Naive thymus-derived CD4-positive, alpha-beta T cell (primary cell): ENCODE measurements at regions of chr1 and their contacts with region 1.

Region 1: DNA sequence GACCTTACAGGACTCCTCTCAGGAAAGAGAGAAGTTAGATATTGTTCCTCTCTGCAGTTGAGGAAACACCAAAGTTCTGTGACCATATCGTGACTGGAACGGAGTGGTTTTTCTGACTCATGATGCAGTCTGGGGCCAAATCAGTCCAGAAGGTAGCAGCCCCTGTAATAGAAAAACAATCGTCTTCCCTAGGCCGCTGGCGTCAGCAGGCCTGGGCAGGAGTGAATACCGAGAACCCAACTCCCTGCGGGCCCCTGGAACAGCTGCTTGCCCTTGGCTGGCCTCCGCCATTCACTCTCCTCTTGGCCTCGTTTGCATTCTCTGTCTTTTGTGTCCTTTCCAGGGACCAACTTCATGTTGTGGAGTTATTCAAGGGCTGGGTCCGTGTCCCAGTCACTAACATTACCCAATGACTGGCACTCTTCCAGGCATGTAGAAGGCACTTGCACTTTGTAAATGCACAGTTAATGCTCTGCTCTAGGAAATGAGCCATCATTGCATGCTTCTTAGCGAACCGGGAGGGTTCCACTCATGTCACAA is 10.9 kb upstream of the CD101 start:
- DNase-seq: no peak
- ATAC-seq: peak; percentile 15
- H3K4me3 ChIP-seq: no peak overlapping the region
- H3K4me3 Mint-ChIP-seq: no peak overlapping the region
- H3K27ac ChIP-seq: no peak overlapping the region
- H3K27ac Mint-ChIP-seq: no peak overlapping the region
- H3K4me1 ChIP-seq: peaks cover 6 to 48% of the 10 kb centered on the region in 2 donors
- H3K4me1 Mint-ChIP-seq: peaks cover 22 to 70% (median 67%) of the 10 kb centered on the region in 7 donors
- H3K27me3 ChIP-seq: no peaks in the 10 kb centered on the region
- H3K27me3 Mint-ChIP-seq: no peaks in the 10 kb centered on the region

Region 2: GRCh38 chr1:116754198-116754977 is 236.3 kb before region 1 on chr1 and contains the start of gene CD2:
- CTCF ChIA-PET with region 1: interaction called, 4 read pairs
- POLR2A ChIA-PET with region 1: interaction called, 12 read pairs
- intact Hi-C with region 1: loop called in 1 of 2 experiments (anchors 5 kb)
- DNase-seq: peak in 7 of 9 donors; percentile 58 to 79 (median 71)
- ATAC-seq: peak; percentile 91
- H3K4me3 ChIP-seq: peak within 1 kb of the TSS; percentile 90
- H3K4me3 Mint-ChIP-seq: peak within 1 kb of the TSS; percentile 91 to 100 (median 98)
- H3K27ac ChIP-seq: peak within 1 kb of the TSS; percentile 89
- H3K27ac Mint-ChIP-seq: peak within 1 kb of the TSS; percentile 93 to 99 (median 97)
- H3K4me1 ChIP-seq: peaks cover 27 to 31% of the 10 kb centered on the region in 2 donors
- H3K4me1 Mint-ChIP-seq: peaks cover 25 to 47% (median 43%) of the 10 kb centered on the region in 7 donors
- H3K27me3 ChIP-seq: no peaks in the 10 kb centered on the region
- H3K27me3 Mint-ChIP-seq: no peaks in the 10 kb centered on the region
- total RNA-seq, gene CD2: 105 to 307 (median 174) TPM

Region 3: GRCh38 chr1:116817582-116818064 is 173.1 kb before region 1 on chr1:
- CTCF ChIA-PET with region 1: interaction called, 3 read pairs
- POLR2A ChIA-PET with region 1: interaction called, 4 read pairs
- intact Hi-C with region 1: loop called in 1 of 2 experiments (anchors 1 kb)
- DNase-seq: peak; percentile 43 to 67 (median 63)
- ATAC-seq: peak; percentile 85
- H3K4me3 ChIP-seq: no peak overlapping the region
- H3K4me3 Mint-ChIP-seq: peak overlapping the region; percentile 4 to 75 (median 58)
- H3K27ac ChIP-seq: no peak overlapping the region
- H3K27ac Mint-ChIP-seq: peak overlapping the region in 8 of 9 donors; percentile 22 to 85 (median 82)
- H3K4me1 ChIP-seq: peaks cover 23 to 33% of the 10 kb centered on the region in 2 donors
- H3K4me1 Mint-ChIP-seq: peaks cover 20 to 58% (median 34%) of the 10 kb centered on the region in 7 donors
- H3K27me3 ChIP-seq: no peaks in the 10 kb centered on the region
- H3K27me3 Mint-ChIP-seq: no peaks in the 10 kb centered on the region

Region 4: GRCh38 chr1:116909510-116910378 is 80.9 kb before region 1 on chr1 and contains the start of gene PTGFRN:
- CTCF ChIA-PET with region 1: interaction called, 3 read pairs
- POLR2A ChIA-PET with region 1: no interaction called
- intact Hi-C with region 1: loop called in 1 of 2 experiments (anchors 2 kb)
- DNase-seq: peak in 7 of 9 donors; percentile 5 to 45 (median 22)
- ATAC-seq: peak; percentile 62
- H3K4me3 ChIP-seq: peak within 1 kb of the TSS; percentile 68
- H3K4me3 Mint-ChIP-seq: peak within 1 kb of the TSS in 9 of 10 donors; percentile 72 to 91 (median 84)
- H3K27ac ChIP-seq: peak within 1 kb of the TSS; percentile 52
- H3K27ac Mint-ChIP-seq: peak within 1 kb of the TSS; percentile 18 to 82 (median 64)
- H3K4me1 ChIP-seq: peaks cover 0 to 10% of the 10 kb centered on the region in 2 donors
- H3K4me1 Mint-ChIP-seq: peaks cover 0 to 8% (median 6%) of the 10 kb centered on the region in 7 donors
- H3K27me3 ChIP-seq: no peaks in the 10 kb centered on the region
- H3K27me3 Mint-ChIP-seq: peaks cover 0 to 7% (median 0%) of the 10 kb centered on the region in 5 donors
- total RNA-seq, gene PTGFRN: 1.00 to 5.6 (median 1.5) TPM

Region 5: DNA sequence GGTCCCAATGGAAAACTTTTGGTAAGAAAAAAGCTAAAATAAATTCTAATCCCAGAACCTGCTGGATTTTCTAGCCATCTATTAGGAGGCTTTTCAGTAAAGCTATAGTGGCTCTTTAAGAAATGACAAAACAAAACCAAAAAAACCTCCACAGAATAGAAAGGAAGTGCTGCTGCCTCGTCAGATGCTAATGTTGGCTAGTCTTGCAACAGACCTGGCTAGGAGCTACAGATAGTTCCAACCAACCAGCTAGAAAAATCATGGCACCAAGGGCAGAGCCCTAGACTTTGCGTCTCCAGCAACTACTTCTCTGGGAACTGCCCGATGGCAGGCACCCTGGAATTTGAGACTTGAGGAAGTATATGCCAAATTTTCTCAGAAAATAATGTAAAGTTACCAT is 18.4 kb after region 1 on chr1:
- CTCF ChIA-PET with region 1: interaction called, 4 read pairs
- POLR2A ChIA-PET with region 1: interaction called, 73 read pairs
- intact Hi-C with region 1: loop called in 1 of 2 experiments (anchors 1 kb)
- DNase-seq: peak in 6 of 9 donors; percentile 27 to 55 (median 44)
- ATAC-seq: peak; percentile 70
- H3K4me3 ChIP-seq: no peak overlapping the region
- H3K4me3 Mint-ChIP-seq: peak overlapping the region; percentile 42 to 85 (median 73)
- H3K27ac ChIP-seq: peak overlapping the region; percentile 42
- H3K27ac Mint-ChIP-seq: peak overlapping the region; percentile 72 to 96 (median 92)
- H3K4me1 ChIP-seq: peaks cover 0 to 44% of the 10 kb centered on the region in 2 donors
- H3K4me1 Mint-ChIP-seq: peaks cover 31 to 86% (median 65%) of the 10 kb centered on the region in 7 donors
- H3K27me3 ChIP-seq: no peaks in the 10 kb centered on the region
- H3K27me3 Mint-ChIP-seq: no peaks in the 10 kb centered on the region